ENCODE measurements at regions of chr19 and their contacts with region 1.

Region 1: DNA sequence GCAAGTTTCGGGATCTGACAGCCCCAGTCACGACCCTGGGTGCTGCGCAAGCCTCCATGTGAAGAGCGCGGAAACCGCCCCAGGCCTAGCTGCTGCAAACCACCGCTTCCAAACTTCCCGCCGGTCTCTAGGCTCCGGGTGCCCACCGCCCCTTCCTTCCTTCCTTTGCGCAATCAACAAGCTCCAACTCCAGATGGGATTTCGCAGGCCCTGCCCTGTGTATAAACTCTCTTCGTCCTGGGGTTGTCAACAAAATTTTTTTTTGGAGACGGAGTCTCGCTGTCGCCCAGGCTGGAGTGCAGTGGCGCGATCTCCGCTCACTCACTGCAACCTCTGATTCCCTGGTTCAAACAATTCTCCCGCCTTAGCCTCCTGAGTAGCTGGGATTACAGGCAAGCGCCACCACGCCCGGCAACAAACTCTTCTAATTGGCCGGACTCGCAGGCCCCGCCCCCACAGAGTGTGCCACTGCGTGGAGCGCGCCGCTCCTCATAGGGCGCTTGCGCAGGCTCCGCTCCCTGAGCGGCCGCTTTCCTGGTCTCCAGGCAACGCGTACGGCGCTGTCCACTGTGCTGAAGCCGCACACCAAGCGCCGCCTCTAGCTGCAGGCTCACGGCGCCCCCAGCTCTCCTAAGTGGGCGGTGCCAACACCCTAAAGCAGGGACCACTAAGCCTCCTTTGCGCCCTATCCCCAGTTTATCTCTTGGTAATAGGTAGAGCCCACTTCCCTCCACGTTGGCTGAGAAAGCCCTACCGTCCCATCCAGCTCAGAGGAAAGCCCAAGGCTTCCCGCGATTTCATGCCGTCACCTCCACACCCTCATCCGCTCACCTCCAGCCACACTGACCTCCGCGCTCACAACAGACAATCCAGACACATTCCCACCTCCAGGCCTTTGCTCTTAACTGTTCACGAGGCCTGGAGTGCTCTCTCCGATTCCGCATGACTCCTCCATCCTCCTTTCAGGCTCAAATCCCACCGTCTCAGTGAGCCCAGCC is 5.5 kb upstream of the QTRT1 start:
- DNase-seq: peak; percentile 99
- ATAC-seq: peak; percentile 88
- H3K4me3 Mint-ChIP-seq: peak overlapping the region; percentile 76
- H3K27ac Mint-ChIP-seq: peak overlapping the region; percentile 98
- H3K4me1 Mint-ChIP-seq: peaks cover 22% of the 10 kb centered on the region
- H3K27me3 Mint-ChIP-seq: peaks cover 5% of the 10 kb centered on the region
- CTCF ChIP-seq: no peak

Region 2: DNA sequence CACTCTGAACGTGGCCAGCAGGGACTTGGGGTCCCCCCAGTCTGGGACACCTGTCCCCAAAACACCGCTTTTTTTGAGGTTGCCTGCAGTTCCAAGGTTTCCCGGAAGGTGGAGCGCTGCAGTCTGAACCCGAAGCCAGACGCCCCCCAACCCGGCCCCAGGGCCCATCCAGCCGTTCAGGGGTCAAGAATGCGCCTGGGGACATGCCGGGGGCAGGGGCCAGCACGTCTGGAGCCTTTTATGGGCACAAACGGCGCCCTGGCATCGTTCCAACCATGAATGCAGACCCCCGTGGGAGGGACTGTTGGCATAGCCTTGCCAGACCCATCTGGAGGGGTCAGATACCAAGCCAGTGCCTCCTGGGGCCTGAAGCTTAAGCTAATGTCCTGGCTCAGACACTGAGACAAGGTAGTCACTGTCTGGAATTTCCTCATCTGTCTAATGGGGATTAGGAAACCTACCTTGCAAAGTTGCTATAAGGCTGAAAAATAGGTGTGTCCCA is 185.3 kb before region 1 on chr19:
- CTCF ChIA-PET with region 1: interaction called, 21 read pairs
- POLR2A ChIA-PET with region 1: no interaction called
- DNase-seq: peak; percentile 88
- ATAC-seq: peak; percentile 23
- H3K4me3 Mint-ChIP-seq: no peak overlapping the region
- H3K27ac Mint-ChIP-seq: no peak overlapping the region
- H3K4me1 Mint-ChIP-seq: peaks cover 11% of the 10 kb centered on the region
- H3K27me3 Mint-ChIP-seq: peaks cover 34% of the 10 kb centered on the region
- CTCF ChIP-seq: peak; percentile 80

Region 3: DNA sequence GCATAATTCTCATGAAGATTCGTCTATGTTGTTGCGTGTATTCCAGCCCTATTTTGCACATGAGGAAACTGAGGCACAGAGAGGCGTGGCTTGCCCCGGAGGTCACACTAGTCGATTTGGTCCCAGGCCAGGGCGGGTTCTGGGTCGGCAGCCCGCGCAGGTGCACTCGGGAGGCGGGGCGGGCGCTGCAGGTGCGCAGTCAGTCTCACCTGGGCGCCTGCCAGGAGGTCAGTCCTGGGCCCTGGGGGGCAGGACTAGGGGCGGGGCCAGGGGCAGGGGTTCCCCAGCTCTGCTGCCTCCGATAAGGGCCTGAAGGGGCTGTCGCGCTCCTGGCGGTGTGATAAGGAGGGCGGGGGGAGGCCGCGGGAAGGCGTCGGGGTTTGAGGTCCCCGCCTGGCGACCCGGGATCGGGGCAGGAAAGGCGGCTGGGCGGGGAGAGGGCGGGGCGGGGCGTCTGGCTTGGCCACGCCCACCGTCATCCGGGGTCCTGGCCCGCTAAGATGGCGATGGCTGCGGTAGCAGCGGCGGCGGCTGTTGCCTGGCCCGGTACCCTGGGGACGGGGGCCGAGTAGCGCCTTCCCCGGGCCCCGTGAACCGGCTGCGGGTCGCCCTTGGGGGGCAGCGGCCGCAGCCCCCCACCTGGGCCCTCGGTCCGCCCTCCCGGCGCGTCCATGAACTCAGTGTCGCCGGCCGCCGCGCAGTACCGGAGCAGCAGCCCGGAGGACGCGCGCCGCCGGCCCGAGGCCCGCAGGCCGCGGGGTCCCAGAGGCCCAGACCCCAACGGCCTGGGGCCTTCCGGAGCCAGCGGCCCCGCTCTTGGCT is 152.1 kb before region 1 on chr19 and contains the start of gene ATG4D:
- CTCF ChIA-PET with region 1: interaction called, 51 read pairs
- POLR2A ChIA-PET with region 1: no interaction called
- DNase-seq: peak; percentile 92
- ATAC-seq: peak; percentile 87
- H3K4me3 Mint-ChIP-seq: peak within 1 kb of the TSS; percentile 83
- H3K27ac Mint-ChIP-seq: peak within 1 kb of the TSS; percentile 93
- H3K4me1 Mint-ChIP-seq: peaks cover 4% of the 10 kb centered on the region; the same call in 1 of the 2 replicates
- H3K27me3 Mint-ChIP-seq: peaks cover 6% of the 10 kb centered on the region
- CTCF ChIP-seq: no peak
- total RNA-seq, gene ATG4D: 50.3 to 59.4 TPM (median 53.8 TPM) in 3 replicates

Region 4: DNA sequence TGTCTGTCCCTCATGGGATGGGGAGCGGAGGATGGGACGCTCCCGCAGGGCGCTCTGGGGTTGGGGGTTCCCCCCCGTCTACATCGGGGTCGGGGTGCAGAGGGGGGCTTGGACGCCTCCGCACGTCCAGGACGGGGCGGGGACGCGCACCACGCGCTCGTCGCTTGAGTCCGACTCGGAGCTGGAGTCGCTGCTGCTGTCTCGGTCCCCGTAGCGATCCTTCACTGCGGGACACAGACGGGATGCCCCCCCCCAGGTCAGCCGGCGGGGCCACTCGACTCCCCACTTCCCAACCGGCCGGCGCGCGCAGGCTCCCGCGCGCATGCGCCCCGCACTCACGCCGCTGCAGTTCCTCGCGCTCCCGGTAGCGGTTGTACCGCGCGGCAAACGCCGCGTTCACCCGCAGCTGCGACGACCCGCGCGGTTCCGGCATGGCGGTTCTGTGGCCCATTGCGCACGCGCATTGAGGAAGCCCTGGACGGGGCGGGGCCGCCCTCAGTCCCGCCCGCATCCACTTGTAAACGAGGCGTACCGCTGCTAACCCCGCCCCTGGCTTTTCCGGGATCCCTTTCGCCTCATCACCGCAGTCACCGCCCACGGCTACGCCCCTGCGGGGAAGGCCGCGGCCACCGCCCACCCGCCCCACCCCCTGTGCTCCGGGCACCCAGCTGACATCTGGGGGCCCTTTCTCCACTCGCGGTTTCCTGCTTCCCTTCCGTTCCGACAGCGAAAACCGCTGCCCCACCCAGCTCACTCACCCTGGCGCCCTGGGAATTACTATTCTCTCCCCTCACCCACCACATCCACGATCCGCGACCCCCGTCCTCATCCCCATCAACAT is 129.9 kb before region 1 on chr19 and contains the start of gene KRI1:
- CTCF ChIA-PET with region 1: interaction called, 17 read pairs
- POLR2A ChIA-PET with region 1: no interaction called
- DNase-seq: peak; percentile 99
- ATAC-seq: peak; percentile 46
- H3K4me3 Mint-ChIP-seq: peak within 1 kb of the TSS; percentile 89
- H3K27ac Mint-ChIP-seq: peak within 1 kb of the TSS; percentile 87
- H3K4me1 Mint-ChIP-seq: peaks cover 32% of the 10 kb centered on the region
- H3K27me3 Mint-ChIP-seq: peaks cover 19% of the 10 kb centered on the region
- CTCF ChIP-seq: no peak
- total RNA-seq, gene KRI1: 43.6 to 50.9 TPM (median 49.3 TPM) in 3 replicates

Region 5: GRCh38 chr19:10602330-10603083 is 93.2 kb before region 1 on chr19:
- CTCF ChIA-PET with region 1: interaction called, 11 read pairs
- POLR2A ChIA-PET with region 1: no interaction called
- DNase-seq: peak; percentile 91
- ATAC-seq: peak; percentile 95
- H3K4me3 Mint-ChIP-seq: peak overlapping the region; percentile 84
- H3K27ac Mint-ChIP-seq: no peak overlapping the region
- H3K4me1 Mint-ChIP-seq: peaks cover 12% of the 10 kb centered on the region
- H3K27me3 Mint-ChIP-seq: peaks cover 18% of the 10 kb centered on the region
- CTCF ChIP-seq: no peak

Region 6: GRCh38 chr19:10742476-10742875 is 46.8 kb after region 1 on chr19:
- CTCF ChIA-PET with region 1: no interaction called
- POLR2A ChIA-PET with region 1: no interaction called
- DNase-seq: no peak
- ATAC-seq: no peak
- H3K4me3 Mint-ChIP-seq: no peak overlapping the region
- H3K27ac Mint-ChIP-seq: 0 out of 2 replicates have a peak overlapping the region, but pooled peaks have one; percentile 15
- H3K4me1 Mint-ChIP-seq: peaks cover 2% of the 10 kb centered on the region; the same call in 1 of the 2 replicates
- H3K27me3 Mint-ChIP-seq: no peaks in the 10 kb centered on the region
- CTCF ChIP-seq: no peak

Region 7: DNA sequence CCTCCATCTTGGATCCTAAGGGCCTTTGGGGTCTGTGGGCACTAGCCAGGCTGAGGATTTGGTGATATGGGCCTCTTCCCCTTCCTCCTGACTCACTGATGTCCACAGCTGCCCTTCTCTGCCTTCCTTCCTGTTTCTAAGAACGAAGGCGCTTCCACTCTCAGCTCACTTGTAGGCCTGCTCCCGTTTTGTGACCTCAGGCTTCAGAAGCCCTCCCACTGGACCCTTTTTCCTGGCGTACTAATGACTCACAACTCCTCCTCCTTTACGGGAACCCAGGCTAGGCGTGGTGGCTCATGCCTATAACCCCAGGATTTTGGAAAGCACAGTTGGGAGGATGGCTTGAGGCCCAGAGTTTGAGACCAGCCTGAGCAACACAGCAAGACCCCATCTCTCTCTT is 84.7 kb after region 1 on chr19:
- CTCF ChIA-PET with region 1: no interaction called
- POLR2A ChIA-PET with region 1: no interaction called
- DNase-seq: no peak
- ATAC-seq: no peak
- H3K4me3 Mint-ChIP-seq: no peak overlapping the region
- H3K27ac Mint-ChIP-seq: peak overlapping the region; percentile 63
- H3K4me1 Mint-ChIP-seq: no peaks in the 10 kb centered on the region
- H3K27me3 Mint-ChIP-seq: no peaks in the 10 kb centered on the region
- CTCF ChIP-seq: no peak

Region 8: DNA sequence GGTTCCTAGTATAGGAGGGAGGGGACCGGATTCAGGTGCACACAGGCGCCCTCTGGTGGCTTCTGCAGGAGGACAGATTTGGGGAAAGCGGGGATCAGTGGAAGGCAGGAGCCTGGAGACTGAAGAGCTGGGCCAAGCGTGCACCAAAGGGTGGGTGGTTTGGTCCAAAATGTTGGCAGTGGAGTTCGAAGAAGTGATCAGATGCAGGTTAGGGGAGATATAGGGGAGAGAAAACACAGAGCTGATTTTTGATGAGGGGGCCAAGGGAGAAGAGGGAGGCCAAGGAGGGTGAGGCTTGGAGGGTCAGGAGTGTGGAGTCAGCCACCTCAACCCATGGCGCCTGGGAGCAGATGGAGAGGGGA is 168.8 kb after region 1 on chr19:
- CTCF ChIA-PET with region 1: interaction called, 11 read pairs
- POLR2A ChIA-PET with region 1: no interaction called
- DNase-seq: peak; percentile 91
- ATAC-seq: peak; percentile 91
- H3K4me3 Mint-ChIP-seq: no peak overlapping the region
- H3K27ac Mint-ChIP-seq: no peak overlapping the region
- H3K4me1 Mint-ChIP-seq: peaks cover 8% of the 10 kb centered on the region
- H3K27me3 Mint-ChIP-seq: no peaks in the 10 kb centered on the region; the same call in 1 of the 2 replicates
- CTCF ChIP-seq: peak; percentile 83

Measured in WTC11 (cell line).